ENCODE measurements at regions of chr19 and their contacts with region 1.

Region 1: DNA sequence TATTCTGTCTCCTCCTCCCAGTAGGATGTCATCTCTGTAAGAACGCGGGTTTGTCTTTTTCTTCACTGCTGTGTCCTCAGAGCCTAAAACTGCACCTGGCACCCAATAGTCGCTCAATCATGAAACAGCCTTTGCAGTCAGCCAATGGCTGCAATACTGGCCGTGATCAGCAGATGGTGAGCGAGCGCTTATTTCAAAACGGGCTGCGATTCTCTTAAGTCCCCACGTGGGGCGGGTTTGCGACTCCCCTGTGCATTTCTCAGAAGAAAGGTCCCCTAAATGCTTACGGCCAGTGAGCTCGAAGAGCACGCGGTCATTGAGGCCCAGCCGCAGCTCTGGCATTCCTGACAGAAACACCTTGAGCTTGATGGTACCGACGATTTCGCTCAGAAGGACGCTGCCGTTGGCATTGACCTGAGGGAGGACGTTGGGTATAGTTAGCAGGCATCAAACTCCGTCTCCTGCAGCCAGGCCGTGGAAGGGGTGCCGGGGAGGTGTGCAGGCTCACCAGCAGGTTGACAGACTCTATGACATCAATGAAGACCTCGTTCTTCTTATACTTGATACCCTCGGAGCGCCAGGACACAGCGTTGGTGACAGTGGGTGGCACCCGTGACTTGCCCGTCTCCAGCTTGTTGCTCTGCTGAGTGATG is 6.0 kb downstream of the AP1M2 start:
- DNase-seq: peak; percentile 95
- ATAC-seq: peak; percentile 92
- H3K4me3 Mint-ChIP-seq: no peak overlapping the region
- H3K27ac Mint-ChIP-seq: no peak overlapping the region
- H3K4me1 Mint-ChIP-seq: peaks cover 32% of the 10 kb centered on the region
- H3K27me3 Mint-ChIP-seq: no peaks in the 10 kb centered on the region

Region 2: GRCh38 chr19:10380313-10381102 is 200.6 kb before region 1 on chr19 and contains the start of gene TYK2:
- CTCF ChIA-PET with region 1: no interaction called
- POLR2A ChIA-PET with region 1: no interaction called
- DNase-seq: peak; percentile 97
- ATAC-seq: peak; percentile 97
- H3K4me3 Mint-ChIP-seq: peak within 1 kb of the TSS; percentile 89
- H3K27ac Mint-ChIP-seq: peak within 1 kb of the TSS; percentile 91
- H3K4me1 Mint-ChIP-seq: peaks cover 26% of the 10 kb centered on the region
- H3K27me3 Mint-ChIP-seq: no peaks in the 10 kb centered on the region
- total RNA-seq, gene TYK2: 216 to 240 TPM

Region 3: GRCh38 chr19:10543420-10544241 is 37.5 kb before region 1 on chr19 and contains the start of gene ATG4D:
- CTCF ChIA-PET with region 1: interaction called, 12 read pairs
- POLR2A ChIA-PET with region 1: no interaction called
- DNase-seq: peak; percentile 85
- ATAC-seq: peak; percentile 85
- H3K4me3 Mint-ChIP-seq: peak within 1 kb of the TSS; percentile 90
- H3K27ac Mint-ChIP-seq: peak within 1 kb of the TSS; percentile 88
- H3K4me1 Mint-ChIP-seq: peaks cover 21% of the 10 kb centered on the region
- H3K27me3 Mint-ChIP-seq: peaks cover 15% of the 10 kb centered on the region
- total RNA-seq, gene ATG4D: 46.1 to 46.9 TPM

Region 4: GRCh38 chr19:10602330-10603083 is 21.4 kb after region 1 on chr19:
- CTCF ChIA-PET with region 1: interaction called, 70 read pairs
- POLR2A ChIA-PET with region 1: interaction called, 22 read pairs
- DNase-seq: peak; percentile 91
- ATAC-seq: peak; percentile 83
- H3K4me3 Mint-ChIP-seq: peak overlapping the region; percentile 94
- H3K27ac Mint-ChIP-seq: peak overlapping the region; percentile 100
- H3K4me1 Mint-ChIP-seq: peaks cover 29% of the 10 kb centered on the region
- H3K27me3 Mint-ChIP-seq: peaks cover 6% of the 10 kb centered on the region

Region 5: GRCh38 chr19:10625003-10625776 is 44.1 kb after region 1 on chr19 and contains the start of gene SLC44A2:
- CTCF ChIA-PET with region 1: interaction called, 26 read pairs
- POLR2A ChIA-PET with region 1: no interaction called
- DNase-seq: no peak
- ATAC-seq: no peak
- H3K4me3 Mint-ChIP-seq: peak within 1 kb of the TSS; percentile 34
- H3K27ac Mint-ChIP-seq: peak within 1 kb of the TSS; percentile 89
- H3K4me1 Mint-ChIP-seq: peaks cover 40% of the 10 kb centered on the region
- H3K27me3 Mint-ChIP-seq: no peaks in the 10 kb centered on the region
- total RNA-seq, gene SLC44A2: 112 to 121 TPM

Region 6: GRCh38 chr19:10653715-10654492 is 72.8 kb after region 1 on chr19 and contains the start of gene ILF3:
- CTCF ChIA-PET with region 1: interaction called, 421 read pairs
- POLR2A ChIA-PET with region 1: interaction called, 8 read pairs
- DNase-seq: peak; percentile 100
- ATAC-seq: peak; percentile 79
- H3K4me3 Mint-ChIP-seq: peak within 1 kb of the TSS; percentile 84
- H3K27ac Mint-ChIP-seq: peak within 1 kb of the TSS; percentile 94
- H3K4me1 Mint-ChIP-seq: peaks cover 37% of the 10 kb centered on the region
- H3K27me3 Mint-ChIP-seq: no peaks in the 10 kb centered on the region
- total RNA-seq, gene ILF3: 407 to 408 TPM

Region 7: GRCh38 chr19:10695401-10696398 is 114.6 kb after region 1 on chr19:
- CTCF ChIA-PET with region 1: interaction called, 135 read pairs
- POLR2A ChIA-PET with region 1: interaction called, 5 read pairs
- DNase-seq: peak; percentile 94
- ATAC-seq: peak; percentile 96
- H3K4me3 Mint-ChIP-seq: peak overlapping the region; percentile 69
- H3K27ac Mint-ChIP-seq: no peak overlapping the region
- H3K4me1 Mint-ChIP-seq: peaks cover 17% of the 10 kb centered on the region
- H3K27me3 Mint-ChIP-seq: peaks cover 9% of the 10 kb centered on the region

Measured in activated CD8-positive, alpha-beta T cell treated with anti-CD3 and anti-CD28 coated beads, Interleukin-2, amount 10 ng/mL, durations not matched to agents 7 days and 5 days (primary cell).